AG04450 (cell line): ENCODE measurements at regions of chr2 and their contacts with region 1.

Region 1: GRCh38 chr2:71299507-71299906 is 32.1 kb upstream of the ZNF638 start:
- DNase-seq: no peak
- H3K4me3 ChIP-seq: no peak overlapping the region
- H3K27ac ChIP-seq: no peak overlapping the region
- H3K27me3 ChIP-seq: peaks cover 8% of the 10 kb centered on the region
- CTCF ChIP-seq: peak; percentile 78

Region 2: GRCh38 chr2:71223767-71224333 is 75.7 kb before region 1 on chr2:
- CTCF ChIA-PET with region 1: interaction called, 10 read pairs
- POLR2A ChIA-PET with region 1: interaction called, 7 read pairs
- DNase-seq: no peak
- H3K4me3 ChIP-seq: no peak overlapping the region
- H3K27ac ChIP-seq: no peak overlapping the region
- H3K27me3 ChIP-seq: peaks cover 14% of the 10 kb centered on the region
- CTCF ChIP-seq: peak; percentile 34

Region 3: DNA sequence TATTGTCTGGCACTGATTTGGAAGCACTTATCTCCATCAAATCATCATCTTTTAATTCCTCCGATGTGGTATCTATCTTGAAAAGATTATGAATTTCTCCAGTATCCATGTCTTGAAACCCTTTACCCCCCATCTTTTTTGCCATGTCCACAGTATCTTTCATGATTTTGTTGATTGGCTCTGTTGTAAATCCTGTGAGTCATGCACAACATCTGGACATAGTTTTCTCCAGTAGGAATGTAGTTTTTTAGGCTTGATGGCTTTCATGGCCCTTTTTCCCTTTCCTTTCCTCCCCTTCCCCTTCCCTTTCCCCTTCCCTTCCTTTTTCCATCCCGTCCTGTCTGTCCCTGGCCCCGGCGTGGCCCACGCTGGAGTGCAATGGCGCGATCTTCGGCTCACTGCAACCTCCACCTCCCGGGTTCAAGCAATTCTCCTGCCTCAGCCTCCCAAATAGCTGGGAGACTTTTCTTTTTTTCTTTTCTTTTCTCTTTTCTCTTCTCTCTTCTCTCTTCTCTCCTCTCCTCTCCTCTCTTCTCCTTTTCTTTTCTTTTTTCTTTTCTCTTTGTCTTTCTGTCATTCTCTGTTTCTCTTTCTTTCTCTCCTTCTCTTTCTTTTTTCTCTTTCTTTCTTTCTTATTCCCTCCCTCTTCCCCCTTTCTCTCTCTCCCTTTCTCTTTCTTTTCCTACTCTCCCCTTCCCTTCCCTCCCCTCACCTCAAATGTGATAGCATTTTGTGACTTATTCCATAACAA is 13.7 kb after region 1 on chr2:
- CTCF ChIA-PET with region 1: interaction called, 33 read pairs
- POLR2A ChIA-PET with region 1: no interaction called
- DNase-seq: no peak
- H3K4me3 ChIP-seq: no peak overlapping the region
- H3K27ac ChIP-seq: no peak overlapping the region
- H3K27me3 ChIP-seq: no peaks in the 10 kb centered on the region
- CTCF ChIP-seq: no peak

Region 4: DNA sequence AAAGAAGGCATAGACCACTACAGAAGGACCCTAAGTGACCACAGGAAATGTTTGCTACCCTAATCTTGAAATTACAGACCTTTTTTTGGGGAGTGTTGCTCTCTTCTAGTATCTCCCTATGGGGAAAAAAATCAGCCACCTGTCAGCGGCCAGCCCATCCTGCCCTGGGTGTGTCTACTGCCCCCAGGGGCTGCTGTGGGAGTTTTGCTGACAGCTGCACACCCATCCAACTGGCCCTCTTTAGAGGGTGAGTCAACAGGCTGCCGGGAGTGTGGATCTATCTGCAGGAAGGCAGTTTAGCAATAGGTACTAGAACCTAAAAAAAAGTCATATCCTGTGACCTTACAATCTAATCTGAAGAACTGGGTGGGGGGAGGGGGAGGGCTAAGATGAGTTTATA is 153.1 kb after region 1 on chr2:
- CTCF ChIA-PET with region 1: interaction called, 12 read pairs
- POLR2A ChIA-PET with region 1: no interaction called
- DNase-seq: no peak
- H3K4me3 ChIP-seq: no peak overlapping the region
- H3K27ac ChIP-seq: no peak overlapping the region
- H3K27me3 ChIP-seq: peaks cover 31% of the 10 kb centered on the region
- CTCF ChIP-seq: no peak

Region 5: DNA sequence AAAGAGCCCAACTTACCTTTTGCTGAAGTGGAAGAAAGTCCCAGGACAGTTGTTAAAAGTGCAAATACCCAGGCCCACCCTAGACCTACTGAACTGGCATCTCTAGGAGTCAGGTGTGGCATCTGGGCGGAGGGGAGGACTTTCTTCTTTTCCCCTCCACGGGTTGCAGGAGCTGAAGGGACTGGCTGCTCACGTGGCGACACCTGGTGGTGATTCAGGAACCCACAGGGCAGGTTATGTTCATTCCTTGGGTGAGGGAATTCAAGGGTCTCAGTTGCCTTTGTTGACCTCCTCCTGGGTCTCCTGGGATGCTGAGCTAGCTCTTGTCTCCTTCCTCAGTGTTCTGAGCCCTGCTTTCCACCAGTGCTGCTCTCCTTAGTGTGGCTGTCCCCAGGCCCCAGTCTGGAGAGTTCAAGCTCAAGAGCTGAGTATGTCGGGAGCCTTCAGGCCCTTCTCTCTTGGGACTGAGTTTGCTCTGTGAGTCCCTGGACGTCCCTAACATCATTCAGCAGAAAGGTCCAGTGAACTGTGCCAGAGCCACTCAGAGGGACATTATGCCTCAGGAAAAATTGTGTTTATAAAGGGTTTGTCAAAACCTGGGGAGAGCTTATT is 210.8 kb after region 1 on chr2:
- CTCF ChIA-PET with region 1: interaction called, 467 read pairs
- POLR2A ChIA-PET with region 1: no interaction called
- DNase-seq: peak; percentile 27
- H3K4me3 ChIP-seq: no peak overlapping the region
- H3K27ac ChIP-seq: no peak overlapping the region
- H3K27me3 ChIP-seq: peaks cover 18% of the 10 kb centered on the region
- CTCF ChIP-seq: peak; percentile 94